Activated CD4-positive, alpha-beta memory T cell treated with anti-CD3 and anti-CD28 coated beads for 36 hours (primary cell): ENCODE measurements at regions of chr4 and their contacts with region 1.

Region 1: DNA sequence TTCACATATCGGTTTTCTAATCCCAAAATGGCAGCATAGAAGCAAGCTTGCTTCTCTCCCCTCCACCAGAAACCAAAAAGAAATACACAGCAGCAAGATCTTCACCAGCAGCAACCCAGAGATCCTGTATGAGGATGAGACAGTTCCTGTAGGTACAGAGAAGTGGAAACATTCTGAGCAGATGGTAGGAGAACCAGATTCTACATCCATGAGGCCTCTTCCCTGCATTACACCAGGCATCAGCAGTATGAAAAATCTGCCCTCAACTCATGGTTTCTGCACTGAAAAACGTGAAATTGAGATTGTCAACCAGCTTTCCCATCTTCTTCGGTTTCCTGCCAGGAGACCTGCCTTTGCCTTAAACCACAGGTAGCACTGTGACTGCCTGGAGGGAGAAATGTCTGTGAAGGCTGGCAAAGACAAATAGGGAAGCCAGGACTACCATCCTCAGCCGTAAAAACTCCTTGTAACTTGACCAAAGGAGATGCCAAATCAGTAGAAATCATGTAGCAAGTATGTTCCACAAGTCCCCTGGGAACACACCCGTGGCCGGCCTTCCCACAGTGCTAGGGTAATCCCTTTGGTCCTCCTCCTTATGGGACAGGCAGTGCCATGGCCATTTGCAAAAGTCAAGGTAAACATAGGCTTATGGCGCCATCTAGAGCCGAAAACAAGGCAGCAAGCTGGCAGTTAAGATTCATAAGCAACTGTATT is 24.0 kb upstream of the MTHFD2L start:
- DNase-seq: peak; percentile 62
- H3K4me3 Mint-ChIP-seq: no peak overlapping the region
- H3K27ac Mint-ChIP-seq: no peak overlapping the region
- H3K4me1 Mint-ChIP-seq: no peaks in the 10 kb centered on the region
- H3K27me3 Mint-ChIP-seq: peaks cover 10% of the 10 kb centered on the region

Region 2: DNA sequence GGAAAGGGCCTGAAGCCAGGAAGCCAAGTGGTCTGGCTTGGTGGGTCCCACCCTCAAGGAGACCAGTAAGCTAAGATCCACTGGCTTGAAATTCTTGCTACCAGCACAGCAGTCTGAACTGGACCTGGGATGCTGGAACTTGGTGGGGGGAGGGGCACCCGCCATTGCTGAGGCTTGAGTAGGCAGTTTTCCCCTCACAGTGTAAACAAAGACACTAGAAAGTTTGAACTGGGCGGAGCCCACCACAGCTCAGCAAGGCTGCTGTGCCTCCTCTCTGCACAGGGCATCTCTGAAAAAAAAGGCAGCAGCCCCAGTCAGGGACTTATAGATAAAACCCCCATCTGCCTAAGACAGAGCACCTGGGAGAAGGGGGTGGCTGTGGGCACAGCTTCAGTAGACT is 589.3 kb before region 1 on chr4:
- CTCF ChIA-PET with region 1: no interaction called
- POLR2A ChIA-PET with region 1: no interaction called
- intact Hi-C with region 1: no loop called
- DNase-seq: no peak
- H3K4me3 Mint-ChIP-seq: no peak overlapping the region
- H3K27ac Mint-ChIP-seq: no peak overlapping the region
- H3K4me1 Mint-ChIP-seq: no peaks in the 10 kb centered on the region
- H3K27me3 Mint-ChIP-seq: peaks cover 1% of the 10 kb centered on the region

Region 3: DNA sequence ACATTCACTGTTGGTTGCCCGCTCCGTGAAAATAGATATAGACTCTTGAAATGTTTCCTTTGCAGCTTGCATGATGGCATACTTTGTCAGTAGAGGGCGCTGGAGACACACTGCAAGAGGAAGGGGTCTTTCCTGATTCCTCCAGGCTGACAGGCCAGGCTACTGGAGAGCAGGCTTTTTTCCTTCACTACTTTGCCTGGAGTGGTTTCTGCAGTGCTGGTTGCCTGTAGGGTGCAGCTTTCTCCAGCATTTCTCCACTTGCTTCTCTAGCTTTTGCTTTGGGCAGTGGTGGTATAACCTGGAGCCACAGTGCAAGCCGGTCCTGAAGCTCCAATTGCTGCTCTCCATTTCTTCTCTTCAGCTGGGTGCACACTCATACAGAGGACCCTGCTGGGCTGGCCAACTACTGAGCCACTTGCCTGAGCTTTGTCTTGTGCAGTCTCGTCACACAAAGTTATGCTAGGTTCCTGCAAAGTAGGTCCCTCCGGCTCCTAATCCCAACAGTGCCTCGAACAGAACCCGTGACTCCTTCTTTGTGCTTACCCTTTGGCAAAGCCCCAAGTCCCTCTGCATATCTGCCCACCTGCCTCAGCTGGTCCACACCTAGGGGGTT is 560.0 kb before region 1 on chr4:
- CTCF ChIA-PET with region 1: no interaction called
- POLR2A ChIA-PET with region 1: no interaction called
- intact Hi-C with region 1: loop called (anchors 10 kb)
- DNase-seq: peak; percentile 30
- H3K4me3 Mint-ChIP-seq: no peak overlapping the region
- H3K27ac Mint-ChIP-seq: no peak overlapping the region
- H3K4me1 Mint-ChIP-seq: no peaks in the 10 kb centered on the region
- H3K27me3 Mint-ChIP-seq: no peaks in the 10 kb centered on the region

Region 4: DNA sequence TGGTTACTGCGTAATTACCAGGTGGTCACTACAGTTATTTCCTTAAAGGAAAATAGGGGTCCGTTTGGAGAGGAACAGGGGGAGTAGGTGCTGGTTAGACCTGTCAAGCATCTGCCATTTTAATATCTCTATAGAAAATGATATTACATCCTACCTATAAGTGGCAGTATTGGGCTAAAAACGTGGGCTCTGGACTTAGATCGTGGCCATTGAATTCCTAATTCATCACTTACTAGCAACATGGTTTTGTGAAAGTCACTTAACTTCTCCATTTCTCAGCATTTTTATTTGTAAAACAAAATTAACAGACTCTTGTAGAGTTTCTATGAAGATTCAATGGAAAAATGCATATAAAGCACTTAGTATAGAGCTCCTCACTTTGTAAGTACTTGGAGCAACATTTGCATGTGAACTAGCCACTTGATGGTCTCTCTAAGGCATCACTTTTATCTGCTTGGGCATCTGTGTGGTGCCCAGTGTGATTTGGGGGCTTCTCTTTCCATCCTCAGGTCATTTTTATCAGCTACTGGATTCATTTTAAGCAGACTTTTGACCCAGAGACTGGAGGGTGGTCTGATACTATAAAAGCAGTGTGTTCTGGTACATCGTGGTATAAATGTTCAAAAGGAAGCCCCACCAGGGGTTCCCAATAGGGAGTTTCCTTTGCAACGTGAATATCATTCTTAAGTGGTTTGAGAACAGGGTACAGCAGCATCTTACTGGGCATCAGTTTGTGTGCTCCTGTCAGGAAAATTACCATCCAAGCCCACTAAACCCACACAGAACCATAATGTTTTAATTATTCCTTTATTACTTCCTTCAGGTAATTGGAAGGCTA is 471.0 kb before region 1 on chr4:
- CTCF ChIA-PET with region 1: interaction called, 3 read pairs
- POLR2A ChIA-PET with region 1: no interaction called
- intact Hi-C with region 1: loop called (anchors 2 kb)
- DNase-seq: no peak
- H3K4me3 Mint-ChIP-seq: no peak overlapping the region
- H3K27ac Mint-ChIP-seq: no peak overlapping the region
- H3K4me1 Mint-ChIP-seq: no peaks in the 10 kb centered on the region
- H3K27me3 Mint-ChIP-seq: no peaks in the 10 kb centered on the region

Region 5: DNA sequence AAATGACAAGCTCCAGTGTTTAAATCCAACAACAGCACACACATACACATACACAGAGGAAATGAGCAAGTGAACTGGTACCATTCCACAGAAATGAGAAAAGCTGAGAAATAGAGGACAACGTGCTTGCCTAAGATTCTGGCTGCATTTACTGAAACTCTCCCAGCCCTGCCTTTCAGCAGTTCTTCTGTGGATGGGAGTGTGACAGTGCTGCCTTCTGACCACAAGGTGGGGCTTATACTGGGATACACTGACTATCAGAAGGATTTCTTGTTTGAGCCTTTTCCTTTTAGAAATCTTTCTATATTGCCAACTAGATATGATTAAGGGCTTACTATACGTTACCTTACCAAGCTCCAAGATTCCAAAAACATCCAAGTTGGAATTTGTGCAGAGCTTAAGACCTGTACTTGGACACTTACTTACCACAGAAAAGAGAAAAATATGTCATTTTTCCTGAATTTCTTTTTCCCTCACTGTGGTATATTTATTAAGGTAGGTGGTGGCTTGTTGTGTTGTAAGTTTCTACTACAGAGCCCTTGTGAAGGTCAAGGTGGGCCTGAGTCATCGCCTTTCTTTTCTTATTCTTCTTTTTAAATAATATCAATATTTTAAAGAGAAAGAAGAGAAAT is 404.3 kb before region 1 on chr4:
- CTCF ChIA-PET with region 1: interaction called, 3 read pairs
- POLR2A ChIA-PET with region 1: no interaction called
- intact Hi-C with region 1: loop called (anchors 10 kb)
- DNase-seq: no peak
- H3K4me3 Mint-ChIP-seq: no peak overlapping the region
- H3K27ac Mint-ChIP-seq: no peak overlapping the region
- H3K4me1 Mint-ChIP-seq: no peaks in the 10 kb centered on the region
- H3K27me3 Mint-ChIP-seq: no peaks in the 10 kb centered on the region

Region 6: DNA sequence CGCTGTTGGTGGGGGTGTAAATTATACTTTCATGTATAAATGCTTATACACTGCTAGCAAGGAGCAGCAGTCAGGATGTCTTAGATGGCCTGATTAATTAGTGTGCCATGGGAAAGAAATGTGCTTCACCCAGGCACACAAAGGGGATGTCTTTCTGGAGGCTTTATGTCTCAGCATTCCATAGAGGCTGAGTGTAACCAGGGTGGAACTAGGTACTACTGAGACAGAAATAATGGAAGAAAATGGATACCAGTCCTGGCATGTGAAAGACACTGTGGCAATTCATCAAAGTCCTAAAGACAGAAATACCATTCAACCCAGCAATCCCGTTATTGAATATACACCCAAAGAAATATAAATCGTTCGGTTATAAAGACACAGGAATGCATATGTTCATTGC is 204.7 kb before region 1 on chr4:
- CTCF ChIA-PET with region 1: no interaction called
- POLR2A ChIA-PET with region 1: no interaction called
- intact Hi-C with region 1: no loop called
- DNase-seq: no peak
- H3K4me3 Mint-ChIP-seq: no peak overlapping the region
- H3K27ac Mint-ChIP-seq: no peak overlapping the region
- H3K4me1 Mint-ChIP-seq: no peaks in the 10 kb centered on the region
- H3K27me3 Mint-ChIP-seq: no peaks in the 10 kb centered on the region